ENCODE measurements at regions of chr1 and their contacts with region 1.

Region 1: DNA sequence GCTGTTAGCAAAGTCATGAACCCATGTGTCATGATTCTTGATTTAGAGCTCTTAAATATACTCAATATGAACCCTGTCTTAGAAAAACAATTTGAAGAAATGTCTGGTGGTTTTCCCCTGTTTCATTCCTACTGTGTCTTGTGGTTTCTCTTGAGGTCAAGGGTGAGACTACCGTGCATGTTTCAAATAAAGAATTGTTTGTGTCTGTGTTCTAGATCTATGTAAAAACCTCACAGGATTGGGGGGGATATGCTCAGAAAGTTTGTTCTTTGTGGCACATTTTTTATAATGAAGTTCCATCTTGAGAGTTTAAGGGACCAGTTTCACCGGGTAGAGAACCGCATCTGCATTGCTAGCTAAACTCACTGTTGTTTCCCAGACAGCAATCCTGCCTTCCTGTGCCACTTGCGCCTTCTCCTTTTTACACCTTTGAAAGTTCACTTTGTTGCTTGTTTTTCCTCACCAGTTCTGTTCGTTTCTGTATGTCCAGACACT is 30.9 kb upstream of the CACYBP start:
- DNase-seq: peak in 7 of 9 donors; percentile 74 to 90 (median 85)
- ATAC-seq: peak; percentile 75
- H3K4me3 ChIP-seq: peak overlapping the region; percentile 18
- H3K4me3 Mint-ChIP-seq: peak overlapping the region; percentile 56 to 86 (median 74)
- H3K27ac ChIP-seq: peak overlapping the region; percentile 71
- H3K27ac Mint-ChIP-seq: peak overlapping the region; percentile 87 to 97 (median 92)
- H3K4me1 ChIP-seq: peaks cover 69 to 76% of the 10 kb centered on the region in 2 donors
- H3K4me1 Mint-ChIP-seq: peaks cover 43 to 87% (median 74%) of the 10 kb centered on the region in 7 donors
- H3K27me3 ChIP-seq: no peaks in the 10 kb centered on the region
- H3K27me3 Mint-ChIP-seq: no peaks in the 10 kb centered on the region

Region 2: DNA sequence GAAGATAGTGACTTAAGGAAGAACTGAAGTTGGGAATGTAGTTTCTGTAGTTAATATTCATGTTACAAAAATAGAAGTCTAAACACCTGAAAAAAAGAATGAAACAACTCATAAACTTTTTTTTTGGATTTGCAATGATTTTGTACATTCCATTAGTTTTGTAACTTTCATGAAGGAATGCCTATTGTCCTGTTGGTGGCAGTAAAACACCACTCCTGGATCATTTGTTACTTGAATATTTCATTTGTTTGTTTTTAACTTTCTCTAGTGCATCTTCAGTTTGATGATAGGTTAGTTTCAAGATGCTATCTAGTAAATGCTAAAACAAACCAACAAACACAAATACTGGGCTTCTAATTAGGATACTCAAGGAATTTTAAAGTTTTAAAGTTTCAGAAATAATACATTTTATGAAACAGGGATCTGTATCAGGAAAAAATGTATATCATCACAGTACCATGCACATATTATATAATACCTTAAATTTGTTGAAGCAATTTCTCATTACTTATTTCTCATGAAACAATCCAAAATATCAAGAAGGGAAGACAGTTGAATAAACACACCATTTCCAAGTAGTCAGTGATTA is 198.7 kb before region 1 on chr1:
- CTCF ChIA-PET with region 1: no interaction called
- POLR2A ChIA-PET with region 1: no interaction called
- intact Hi-C with region 1: no loop called
- DNase-seq: peak in 7 of 9 donors; percentile 19 to 58 (median 43)
- ATAC-seq: peak; percentile 68
- H3K4me3 ChIP-seq: no peak overlapping the region
- H3K4me3 Mint-ChIP-seq: no peak overlapping the region
- H3K27ac ChIP-seq: no peak overlapping the region
- H3K27ac Mint-ChIP-seq: peak overlapping the region in 1 of 9 donors; percentile 12
- H3K4me1 ChIP-seq: no peaks in the 10 kb centered on the region
- H3K4me1 Mint-ChIP-seq: peaks cover 0 to 18% (median 4%) of the 10 kb centered on the region in 7 donors
- H3K27me3 ChIP-seq: no peaks in the 10 kb centered on the region
- H3K27me3 Mint-ChIP-seq: no peaks in the 10 kb centered on the region

Region 3: GRCh38 chr1:174800216-174800851 is 168.5 kb before region 1 on chr1:
- CTCF ChIA-PET with region 1: interaction called, 6 read pairs
- POLR2A ChIA-PET with region 1: interaction called, 27 read pairs
- intact Hi-C with region 1: loop called (anchors 1 kb)
- DNase-seq: peak in 4 of 9 donors; percentile 2 to 29 (median 16)
- ATAC-seq: peak; percentile 7
- H3K4me3 ChIP-seq: peak overlapping the region; percentile 73
- H3K4me3 Mint-ChIP-seq: no peak overlapping the region
- H3K27ac ChIP-seq: peak overlapping the region; percentile 81
- H3K27ac Mint-ChIP-seq: no peak overlapping the region
- H3K4me1 ChIP-seq: peaks cover 7 to 9% of the 10 kb centered on the region in 2 donors
- H3K4me1 Mint-ChIP-seq: peaks cover 0 to 18% (median 6%) of the 10 kb centered on the region in 7 donors
- H3K27me3 ChIP-seq: no peaks in the 10 kb centered on the region
- H3K27me3 Mint-ChIP-seq: no peaks in the 10 kb centered on the region

Region 4: GRCh38 chr1:174883409-174883808 is 85.4 kb before region 1 on chr1:
- CTCF ChIA-PET with region 1: interaction called, 5 read pairs
- POLR2A ChIA-PET with region 1: interaction called, 6 read pairs
- intact Hi-C with region 1: loop called (anchors 1 to 5 kb)
- DNase-seq: peak in 3 of 9 donors; percentile 9 to 35 (median 27)
- ATAC-seq: peak; percentile 44
- H3K4me3 ChIP-seq: no peak overlapping the region
- H3K4me3 Mint-ChIP-seq: no peak overlapping the region
- H3K27ac ChIP-seq: no peak overlapping the region
- H3K27ac Mint-ChIP-seq: peak overlapping the region in 2 of 9 donors; percentile 22 to 46
- H3K4me1 ChIP-seq: no peaks in the 10 kb centered on the region
- H3K4me1 Mint-ChIP-seq: peaks cover 0 to 9% (median 4%) of the 10 kb centered on the region in 7 donors
- H3K27me3 ChIP-seq: no peaks in the 10 kb centered on the region
- H3K27me3 Mint-ChIP-seq: no peaks in the 10 kb centered on the region

Region 5: GRCh38 chr1:174938281-174939007 is 30.4 kb before region 1 on chr1:
- CTCF ChIA-PET with region 1: no interaction called
- POLR2A ChIA-PET with region 1: interaction called, 5 read pairs
- intact Hi-C with region 1: loop called in 1 of 2 experiments (anchors 1 kb)
- DNase-seq: no peak
- ATAC-seq: peak; percentile 41
- H3K4me3 ChIP-seq: no peak overlapping the region
- H3K4me3 Mint-ChIP-seq: peak overlapping the region; percentile 22 to 75 (median 57)
- H3K27ac ChIP-seq: no peak overlapping the region
- H3K27ac Mint-ChIP-seq: peak overlapping the region in 7 of 9 donors; percentile 1 to 81 (median 16)
- H3K4me1 ChIP-seq: no peaks in the 10 kb centered on the region
- H3K4me1 Mint-ChIP-seq: peaks cover 14 to 26% (median 16%) of the 10 kb centered on the region in 7 donors
- H3K27me3 ChIP-seq: no peaks in the 10 kb centered on the region
- H3K27me3 Mint-ChIP-seq: no peaks in the 10 kb centered on the region

Region 6: DNA sequence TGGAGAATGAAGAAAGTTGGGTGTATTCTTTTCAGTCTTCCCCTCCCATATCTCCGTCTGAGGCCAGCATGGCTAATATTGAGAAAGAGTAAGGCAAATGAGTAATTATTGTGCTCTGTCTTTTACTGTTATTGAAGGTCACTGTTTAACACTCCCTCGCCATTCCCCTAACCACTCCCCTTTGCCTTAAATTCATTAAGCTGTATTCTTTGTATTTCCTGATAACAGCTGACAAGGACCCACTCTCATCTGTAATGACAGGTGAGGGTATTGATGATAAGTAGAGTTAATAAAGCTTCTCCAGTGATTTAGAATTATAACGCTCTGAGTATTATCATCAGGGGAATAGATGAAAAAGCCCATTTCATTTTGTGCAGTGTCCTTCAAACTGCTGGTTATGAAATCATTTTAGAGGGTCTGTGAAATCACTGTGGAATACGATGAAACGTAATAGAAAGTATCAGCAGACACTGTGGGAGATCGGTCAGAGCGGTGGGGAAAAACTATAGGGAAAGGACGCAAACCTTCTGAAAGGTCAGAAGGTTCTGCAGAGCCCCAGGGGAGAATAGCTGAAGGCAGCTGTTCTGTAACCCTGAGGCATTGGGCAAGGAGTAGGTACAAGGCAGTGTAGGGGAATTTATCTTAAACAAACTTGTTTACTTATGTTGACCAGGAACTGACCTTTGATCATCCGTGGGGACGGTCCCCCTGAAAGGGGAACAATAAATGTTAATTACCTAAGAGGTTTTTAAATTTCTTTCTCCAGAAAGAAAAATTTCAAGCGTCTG is 15.3 kb before region 1 on chr1:
- CTCF ChIA-PET with region 1: no interaction called
- POLR2A ChIA-PET with region 1: interaction called, 9 read pairs
- intact Hi-C with region 1: loop called (anchors 1 kb)
- DNase-seq: no peak
- ATAC-seq: no peak
- H3K4me3 ChIP-seq: no peak overlapping the region
- H3K4me3 Mint-ChIP-seq: no peak overlapping the region
- H3K27ac ChIP-seq: no peak overlapping the region
- H3K27ac Mint-ChIP-seq: peak overlapping the region in 2 of 9 donors; percentile 1 to 65
- H3K4me1 ChIP-seq: peaks cover 0 to 14% of the 10 kb centered on the region in 2 donors
- H3K4me1 Mint-ChIP-seq: peaks cover 21 to 35% (median 28%) of the 10 kb centered on the region in 7 donors
- H3K27me3 ChIP-seq: no peaks in the 10 kb centered on the region
- H3K27me3 Mint-ChIP-seq: no peaks in the 10 kb centered on the region

Region 7: GRCh38 chr1:174982971-174983689 is 14.3 kb after region 1 on chr1:
- CTCF ChIA-PET with region 1: interaction called, 15 read pairs
- POLR2A ChIA-PET with region 1: interaction called, 154 read pairs
- intact Hi-C with region 1: loop called (anchors 1 kb)
- DNase-seq: peak in 7 of 9 donors; percentile 50 to 69 (median 58)
- ATAC-seq: peak; percentile 41
- H3K4me3 ChIP-seq: no peak overlapping the region
- H3K4me3 Mint-ChIP-seq: no peak overlapping the region
- H3K27ac ChIP-seq: no peak overlapping the region
- H3K27ac Mint-ChIP-seq: peak overlapping the region in 7 of 9 donors; percentile 19 to 91 (median 48)
- H3K4me1 ChIP-seq: peaks cover 0 to 9% of the 10 kb centered on the region in 2 donors
- H3K4me1 Mint-ChIP-seq: peaks cover 9 to 54% (median 40%) of the 10 kb centered on the region in 7 donors
- H3K27me3 ChIP-seq: no peaks in the 10 kb centered on the region
- H3K27me3 Mint-ChIP-seq: no peaks in the 10 kb centered on the region